Lower leg skin (tissue), 4 donors: ENCODE measurements at regions of chr2 and their contacts with region 1.

Region 1: GRCh38 chr2:109510136-109511028 is 103.4 kb downstream of the SEPTIN10 start:
- DNase-seq: peak; percentile 77 to 95
- H3K4me3 ChIP-seq: no peak overlapping the region
- CTCF ChIP-seq: peak in 1 of 3 donors; percentile 80
- POLR2A ChIP-seq: no peak

Region 2: GRCh38 chr2:109128048-109128465 is 382.3 kb before region 1 on chr2:
- intact Hi-C with region 1: loop called (anchors 5 kb)
- DNase-seq: peak; percentile 61 to 96
- H3K4me3 ChIP-seq: peak overlapping the region; percentile 55
- CTCF ChIP-seq: peak in 1 of 3 donors; percentile 83
- POLR2A ChIP-seq: no peak

Region 3: DNA sequence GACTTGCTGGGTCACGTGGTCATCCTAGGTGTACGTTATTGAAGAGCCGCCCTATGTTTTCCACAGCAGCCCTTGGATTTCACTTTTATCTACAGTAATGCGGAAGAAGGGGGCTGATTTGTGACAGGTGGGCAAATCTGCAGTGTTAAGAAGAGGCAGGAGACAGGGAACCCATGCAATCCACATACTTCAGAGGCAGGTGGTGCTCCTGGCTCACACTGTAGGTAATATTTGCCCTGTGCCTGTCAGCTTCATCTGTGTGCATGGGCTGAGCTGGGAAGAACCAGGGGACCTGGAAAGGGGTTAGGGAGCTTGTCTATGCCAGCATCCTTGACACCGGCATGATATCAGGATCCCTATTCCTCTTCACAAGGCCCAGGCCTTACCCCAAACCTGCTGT is 197.5 kb before region 1 on chr2:
- intact Hi-C with region 1: loop called (anchors 5 kb)
- DNase-seq: no peak
- H3K4me3 ChIP-seq: no peak overlapping the region
- CTCF ChIP-seq: no peak
- POLR2A ChIP-seq: no peak

Region 4: DNA sequence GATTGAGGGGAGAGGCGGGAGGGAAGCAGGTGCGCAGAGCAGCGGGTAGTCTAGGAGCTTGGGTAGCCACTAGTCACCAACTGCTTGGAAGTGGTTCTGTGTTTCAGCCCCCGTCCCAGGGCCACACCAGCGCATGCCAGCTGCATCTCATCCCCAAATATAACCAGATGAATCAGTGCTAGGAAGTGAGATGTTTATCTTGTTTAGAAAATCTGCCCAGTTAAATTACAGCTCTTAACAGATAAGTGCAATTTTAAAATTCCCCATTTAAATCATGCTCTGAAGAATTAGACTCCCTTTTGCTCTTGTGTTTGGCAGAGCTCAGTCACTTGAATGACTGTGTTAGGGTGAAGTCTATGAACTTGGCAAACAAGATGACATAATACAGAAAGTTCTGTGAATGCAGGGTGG is 90.4 kb before region 1 on chr2:
- intact Hi-C with region 1: no loop called
- DNase-seq: no peak
- H3K4me3 ChIP-seq: no peak overlapping the region
- CTCF ChIP-seq: no peak
- POLR2A ChIP-seq: no peak